ENCODE measurements at regions of chr20 and their contacts with region 1.

Region 1: DNA sequence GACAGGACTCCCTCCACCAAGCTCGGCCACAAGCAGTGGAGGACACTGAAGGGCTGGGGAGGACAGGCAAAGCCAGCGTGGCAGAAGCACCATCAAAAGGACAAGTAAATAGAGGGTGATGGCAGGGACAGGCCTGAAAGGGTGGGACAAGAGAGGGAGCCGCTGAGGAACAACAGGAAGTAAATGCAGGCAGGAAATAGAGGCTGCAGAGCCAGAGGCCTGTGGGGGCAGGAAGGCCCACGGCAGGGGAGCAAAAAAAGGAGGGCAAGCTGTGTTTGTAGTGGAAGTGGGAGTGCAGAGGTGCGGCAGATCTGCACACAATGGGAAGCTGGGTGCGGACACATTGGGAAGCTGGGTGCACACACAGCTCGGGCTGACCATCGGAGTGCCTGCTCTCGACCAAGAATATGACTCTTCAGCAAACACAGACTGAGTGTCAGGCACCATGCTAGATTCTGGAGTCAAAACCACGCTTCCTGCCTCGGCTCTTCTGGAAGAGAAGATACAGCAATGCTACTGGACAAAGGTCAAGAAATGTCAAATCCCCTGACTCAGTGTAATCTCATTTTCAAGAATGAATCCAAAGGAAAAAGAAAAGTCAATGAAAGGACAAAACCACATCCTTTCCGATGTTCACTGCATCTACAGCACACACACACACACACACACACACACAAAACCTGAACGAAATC is 40.4 kb upstream of the RAB22A start:
- DNase-seq: no peak
- H3K4me3 ChIP-seq: no peak overlapping the region
- H3K27ac ChIP-seq: no peak overlapping the region
- H3K4me1 ChIP-seq: no peaks in the 10 kb centered on the region
- H3K27me3 ChIP-seq: no peaks in the 10 kb centered on the region
- CTCF ChIP-seq: no peak
- POLR2A ChIP-seq: no peak

Region 2: GRCh38 chr20:56897318-56897957 is 1371.6 kb before region 1 on chr20:
- intact Hi-C with region 1: no loop called
- DNase-seq: no peak
- H3K4me3 ChIP-seq: no peak overlapping the region
- H3K27ac ChIP-seq: no peak overlapping the region
- H3K4me1 ChIP-seq: no peaks in the 10 kb centered on the region
- H3K27me3 ChIP-seq: no peaks in the 10 kb centered on the region
- CTCF ChIP-seq: no peak
- POLR2A ChIP-seq: no peak

Region 3: DNA sequence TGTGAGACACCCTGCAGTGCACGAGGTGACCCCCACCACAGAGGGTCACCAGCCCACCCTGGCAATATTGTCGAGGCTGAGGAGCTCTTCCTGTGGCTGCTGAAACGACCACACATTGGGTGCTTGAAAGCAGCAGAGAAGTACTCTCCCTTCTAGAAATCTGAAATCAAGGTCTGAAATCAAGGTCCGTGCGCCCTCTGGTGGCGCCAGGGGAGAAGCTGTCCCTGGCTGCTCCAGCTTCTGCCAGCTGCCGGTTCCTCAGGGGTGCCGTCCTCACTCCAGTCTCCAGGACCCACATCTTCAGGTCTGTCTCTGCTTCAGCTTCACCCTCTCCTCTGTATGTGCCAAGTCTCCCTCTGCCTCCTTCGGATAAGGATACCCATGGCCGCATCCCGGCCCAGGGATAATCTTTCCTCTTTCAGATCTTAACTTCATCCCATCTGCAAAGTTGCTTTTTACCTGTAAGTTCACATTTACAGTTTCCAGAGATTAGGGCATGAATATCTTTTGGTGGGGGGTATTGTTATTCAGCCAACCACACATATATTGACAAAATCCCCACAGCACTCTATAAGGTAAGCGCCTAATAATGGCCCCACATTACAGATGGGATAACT is 1226.9 kb after region 1 on chr20:
- intact Hi-C with region 1: loop called (anchors 10 kb)
- DNase-seq: peak; percentile 36 to 61
- H3K4me3 ChIP-seq: no peak overlapping the region
- H3K27ac ChIP-seq: no peak overlapping the region
- H3K4me1 ChIP-seq: no peaks in the 10 kb centered on the region
- H3K27me3 ChIP-seq: peaks cover 0 to 23% of the 10 kb centered on the region in 2 donors
- CTCF ChIP-seq: peak; percentile 37 to 67 (median 59)
- POLR2A ChIP-seq: no peak